ENCODE measurements at regions of chr5 and their contacts with region 1.

Region 1: DNA sequence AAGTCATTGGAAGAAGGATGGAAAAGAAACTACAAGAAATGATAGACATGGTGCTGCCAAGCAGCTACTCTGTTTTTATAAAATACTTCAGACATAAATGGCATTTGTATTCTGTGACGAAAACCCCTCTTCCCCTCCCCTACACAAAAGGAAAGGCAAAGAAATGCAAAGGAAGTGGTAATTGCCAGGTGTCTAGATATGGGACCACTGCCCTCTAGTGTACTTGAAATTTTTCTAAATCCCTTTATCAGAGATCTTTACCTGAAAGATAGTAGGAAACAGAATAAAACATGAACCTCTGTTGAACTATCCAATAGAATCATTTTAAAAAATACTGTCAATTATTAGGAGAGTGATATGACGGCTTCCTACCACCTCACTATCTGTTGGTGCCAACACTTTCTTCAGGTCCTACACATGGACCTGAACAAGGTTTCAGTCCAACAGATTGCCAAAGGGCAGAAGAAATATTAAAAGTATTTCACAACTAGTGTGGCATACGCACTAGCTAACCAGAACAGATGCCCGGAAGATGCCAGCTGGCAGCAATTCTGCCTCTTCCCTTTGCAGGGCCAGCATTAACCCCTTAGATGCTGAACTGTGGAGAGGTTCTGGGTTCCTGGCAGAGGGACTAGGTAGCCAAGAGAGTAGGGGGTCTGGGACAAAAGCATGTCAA is 104.1 kb downstream of the TSSK1B start:
- DNase-seq: no peak
- ATAC-seq: peak; percentile 89
- H3K4me3 Mint-ChIP-seq: no peak overlapping the region
- H3K27ac Mint-ChIP-seq: no peak overlapping the region
- H3K4me1 Mint-ChIP-seq: peaks cover 11% of the 10 kb centered on the region
- H3K27me3 Mint-ChIP-seq: no peaks in the 10 kb centered on the region
- CTCF ChIP-seq: peak; percentile 61

Region 2: DNA sequence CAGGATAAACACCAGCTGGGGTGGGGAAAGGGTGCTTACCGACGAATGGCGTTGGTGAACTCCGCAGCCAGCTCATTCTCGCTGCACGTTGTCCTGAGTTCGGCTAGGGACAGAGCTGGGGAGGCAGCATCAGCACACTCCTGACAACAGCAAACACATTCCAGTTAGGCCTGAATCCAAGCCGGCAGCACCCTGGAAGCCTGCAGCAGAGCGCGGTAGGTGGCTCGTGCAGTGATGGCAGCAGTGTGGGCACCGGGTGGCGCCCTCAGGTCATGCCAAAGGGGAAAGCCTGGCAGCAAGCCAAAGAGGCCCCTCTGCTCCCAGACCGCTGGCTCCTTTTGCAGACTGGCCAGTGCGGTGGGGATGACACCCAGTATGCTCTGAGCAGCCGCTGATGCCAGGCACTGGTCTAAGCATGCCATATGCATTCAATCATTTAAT is 287.2 kb before region 1 on chr5:
- CTCF ChIA-PET with region 1: interaction called, 5 read pairs
- POLR2A ChIA-PET with region 1: no interaction called
- intact Hi-C with region 1: loop called (anchors 2 kb)
- DNase-seq: peak; percentile 59
- ATAC-seq: peak; percentile 45
- H3K4me3 Mint-ChIP-seq: no peak overlapping the region
- H3K27ac Mint-ChIP-seq: no peak overlapping the region
- H3K4me1 Mint-ChIP-seq: no peaks in the 10 kb centered on the region
- H3K27me3 Mint-ChIP-seq: no peaks in the 10 kb centered on the region
- CTCF ChIP-seq: peak; percentile 63

Region 3: DNA sequence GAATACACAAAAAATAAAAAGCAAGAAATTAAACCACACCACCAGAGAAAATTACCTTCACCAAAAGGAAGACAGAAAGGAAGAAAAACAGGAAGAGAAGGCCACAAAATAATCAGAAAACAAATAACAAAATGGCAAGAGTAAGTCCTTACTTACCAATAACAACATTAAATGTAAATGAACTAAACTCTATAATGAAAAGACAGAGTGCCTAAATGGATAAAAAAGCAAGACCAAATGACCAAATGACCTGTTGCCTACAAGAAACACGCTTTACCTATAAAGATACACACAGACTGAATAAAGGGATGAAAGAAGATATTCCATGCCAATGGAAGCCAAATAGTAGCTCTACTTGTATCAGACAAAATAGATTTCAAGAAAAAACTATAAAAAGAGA is 16.9 kb after region 1 on chr5:
- CTCF ChIA-PET with region 1: no interaction called
- POLR2A ChIA-PET with region 1: no interaction called
- intact Hi-C with region 1: no loop called
- DNase-seq: no peak
- ATAC-seq: no peak
- H3K4me3 Mint-ChIP-seq: no peak overlapping the region
- H3K27ac Mint-ChIP-seq: no peak overlapping the region
- H3K4me1 Mint-ChIP-seq: no peaks in the 10 kb centered on the region
- H3K27me3 Mint-ChIP-seq: peaks cover 3% of the 10 kb centered on the region
- CTCF ChIP-seq: no peak

Region 4: GRCh38 chr5:113463032-113463431 is 132.4 kb after region 1 on chr5:
- CTCF ChIA-PET with region 1: no interaction called
- POLR2A ChIA-PET with region 1: no interaction called
- intact Hi-C with region 1: no loop called
- DNase-seq: no peak
- ATAC-seq: no peak
- H3K4me3 Mint-ChIP-seq: no peak overlapping the region
- H3K27ac Mint-ChIP-seq: no peak overlapping the region
- H3K4me1 Mint-ChIP-seq: no peaks in the 10 kb centered on the region
- H3K27me3 Mint-ChIP-seq: no peaks in the 10 kb centered on the region
- CTCF ChIP-seq: no peak

Region 5: DNA sequence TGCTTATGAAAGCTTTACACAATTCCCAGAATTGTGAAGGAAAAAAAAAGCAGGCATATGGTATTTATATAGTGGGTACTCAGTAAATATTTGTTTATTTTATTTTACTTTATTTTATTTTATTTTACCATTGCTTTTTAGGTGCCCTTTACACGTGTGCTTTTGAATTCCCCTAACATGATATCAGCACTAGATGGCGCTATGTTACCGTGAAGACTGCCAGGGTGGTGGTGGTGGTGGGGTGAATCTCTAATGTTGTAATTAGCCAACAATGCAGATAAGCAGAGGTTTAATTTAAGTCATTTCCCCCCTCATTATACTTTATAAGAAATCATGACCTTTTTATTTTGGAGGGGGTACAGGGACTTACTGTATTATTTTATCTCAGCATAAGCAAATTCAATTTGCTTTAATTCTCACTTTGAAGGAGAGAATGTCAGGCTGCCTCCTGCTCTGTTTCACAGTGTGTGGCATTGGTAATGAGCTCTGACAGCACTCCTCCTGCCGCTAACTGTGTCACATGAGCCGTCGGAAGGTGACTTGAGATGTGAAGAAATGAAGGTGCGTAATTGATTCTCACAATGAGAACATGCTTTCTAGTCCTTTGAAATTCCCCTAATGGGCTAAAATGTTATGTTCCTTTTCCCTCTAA is 348.4 kb after region 1 on chr5:
- CTCF ChIA-PET with region 1: no interaction called
- POLR2A ChIA-PET with region 1: no interaction called
- intact Hi-C with region 1: no loop called
- DNase-seq: peak; percentile 45
- ATAC-seq: peak; percentile 69
- H3K4me3 Mint-ChIP-seq: no peak overlapping the region
- H3K27ac Mint-ChIP-seq: no peak overlapping the region
- H3K4me1 Mint-ChIP-seq: no peaks in the 10 kb centered on the region
- H3K27me3 Mint-ChIP-seq: no peaks in the 10 kb centered on the region
- CTCF ChIP-seq: peak; percentile 43

Measured in activated CD8-positive, alpha-beta T cell treated with anti-CD3 and anti-CD28 coated beads for 36 hours (primary cell).